MCF 10A (cell line): ENCODE measurements at regions of chr5 and their contacts with region 1.

Region 1: DNA sequence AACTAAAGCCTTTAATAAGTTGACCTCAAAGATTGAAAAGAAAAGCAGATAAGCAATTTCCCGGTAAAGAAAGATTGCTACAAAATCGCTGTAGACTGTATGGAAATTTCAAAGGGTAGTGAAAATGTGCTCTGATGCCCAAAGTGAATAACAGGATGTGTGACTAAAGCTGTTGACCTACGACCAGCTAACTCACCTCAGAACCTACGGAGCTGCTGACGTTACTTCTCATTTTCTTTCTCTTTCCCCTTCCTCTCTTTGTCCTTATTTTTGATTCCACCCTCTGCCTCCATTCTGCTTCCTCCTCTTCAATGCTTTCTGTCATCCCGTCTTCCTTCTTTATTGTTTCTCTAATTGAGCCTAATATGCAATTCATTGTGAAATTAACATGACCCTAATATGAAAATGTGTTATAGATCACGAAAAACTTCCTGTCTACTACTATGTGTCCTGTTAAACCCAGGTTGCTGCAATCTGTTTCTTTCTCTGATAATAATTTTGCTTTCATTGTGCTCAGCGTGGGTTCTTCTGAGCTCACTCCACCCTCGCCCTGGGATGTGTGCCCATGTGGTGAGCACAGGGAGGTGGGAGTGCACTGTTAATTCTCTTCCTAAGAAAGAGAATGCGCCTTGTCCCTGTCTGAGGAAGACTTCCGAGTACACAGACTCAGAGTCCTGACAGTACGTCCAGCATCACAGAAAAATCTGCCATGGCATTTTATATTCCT is 103.0 kb downstream of the PDE4D start:
- DNase-seq: peak; percentile 79
- H3K4me3 Mint-ChIP-seq: peak overlapping the region; percentile 52
- H3K27ac Mint-ChIP-seq: peak overlapping the region; percentile 89
- H3K4me1 Mint-ChIP-seq: peaks cover 67% of the 10 kb centered on the region
- H3K27me3 Mint-ChIP-seq: no peaks in the 10 kb centered on the region
- CTCF ChIP-seq: no peak

Region 2: DNA sequence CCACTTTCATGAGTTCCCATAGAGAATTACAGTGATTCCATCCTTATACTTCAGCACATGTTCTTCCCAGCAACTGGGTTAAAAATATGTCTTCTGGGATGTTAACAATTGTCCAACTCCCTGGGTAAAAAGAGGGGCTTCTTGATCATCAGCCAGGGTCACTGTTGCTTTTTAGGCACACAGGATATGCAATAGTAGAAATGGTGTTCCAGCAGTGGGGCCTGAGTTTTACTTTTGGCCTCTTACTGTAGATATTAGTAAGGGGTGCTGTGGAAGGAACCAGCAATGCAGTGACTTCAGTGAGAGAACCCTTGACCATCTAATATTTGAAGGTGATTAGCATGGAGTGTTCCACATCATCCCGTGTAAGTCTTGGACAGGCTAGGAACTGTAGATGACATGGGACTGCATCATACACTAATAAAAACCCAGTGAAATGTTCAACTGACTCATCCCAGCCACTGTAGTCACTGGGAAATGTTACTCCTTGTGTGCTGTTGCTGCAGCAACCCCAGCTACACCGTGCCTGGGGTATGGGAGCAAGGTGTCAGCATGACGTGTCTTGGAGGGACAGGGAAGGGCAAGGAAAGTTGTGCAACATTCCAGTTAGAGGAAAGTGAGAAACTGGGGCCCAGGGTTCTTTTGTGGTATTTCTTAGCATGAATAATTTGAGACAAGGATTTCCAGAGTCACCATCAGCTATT is 596.8 kb before region 1 on chr5:
- CTCF ChIA-PET with region 1: no interaction called
- POLR2A ChIA-PET with region 1: interaction called, 3 read pairs
- intact Hi-C with region 1: loop called (anchors 5 kb)
- DNase-seq: peak; percentile 98
- H3K4me3 Mint-ChIP-seq: peak overlapping the region; percentile 55
- H3K27ac Mint-ChIP-seq: peak overlapping the region; percentile 100
- H3K4me1 Mint-ChIP-seq: peaks cover 31% of the 10 kb centered on the region
- H3K27me3 Mint-ChIP-seq: no peaks in the 10 kb centered on the region
- CTCF ChIP-seq: no peak

Region 3: DNA sequence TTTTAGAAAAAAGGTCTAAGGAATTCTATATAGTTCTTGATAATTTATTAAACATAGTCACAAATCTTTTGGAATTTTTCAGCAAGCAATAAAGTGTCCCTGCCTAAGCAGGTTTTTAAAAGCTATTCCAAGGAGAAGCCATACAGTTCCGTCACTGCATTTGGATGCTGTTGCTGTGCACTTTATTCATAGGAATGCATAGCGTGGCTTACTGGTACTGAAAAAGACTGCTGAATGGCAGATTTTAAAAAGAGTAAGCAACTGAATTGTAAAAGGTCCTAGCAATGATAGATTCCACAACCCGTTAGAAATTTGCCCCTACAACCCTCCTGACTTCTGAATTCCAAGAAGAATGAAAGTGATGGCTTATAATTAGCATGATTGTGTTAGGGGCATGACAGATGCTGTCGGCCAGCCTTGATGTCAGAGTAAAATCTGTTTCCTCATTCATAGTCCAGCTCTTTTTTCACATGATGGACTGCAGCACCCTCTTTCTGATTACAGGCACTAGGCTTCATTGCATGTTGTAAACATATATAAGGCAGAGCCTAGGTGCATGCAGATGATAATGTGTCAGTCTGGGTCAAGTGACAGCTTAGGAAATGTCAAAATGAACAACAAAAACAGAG is 124.0 kb before region 1 on chr5:
- CTCF ChIA-PET with region 1: no interaction called
- POLR2A ChIA-PET with region 1: interaction called, 10 read pairs
- intact Hi-C with region 1: no loop called
- DNase-seq: no peak
- H3K4me3 Mint-ChIP-seq: no peak overlapping the region
- H3K27ac Mint-ChIP-seq: no peak overlapping the region
- H3K4me1 Mint-ChIP-seq: peaks cover 20% of the 10 kb centered on the region
- H3K27me3 Mint-ChIP-seq: no peaks in the 10 kb centered on the region
- CTCF ChIP-seq: no peak

Region 4: DNA sequence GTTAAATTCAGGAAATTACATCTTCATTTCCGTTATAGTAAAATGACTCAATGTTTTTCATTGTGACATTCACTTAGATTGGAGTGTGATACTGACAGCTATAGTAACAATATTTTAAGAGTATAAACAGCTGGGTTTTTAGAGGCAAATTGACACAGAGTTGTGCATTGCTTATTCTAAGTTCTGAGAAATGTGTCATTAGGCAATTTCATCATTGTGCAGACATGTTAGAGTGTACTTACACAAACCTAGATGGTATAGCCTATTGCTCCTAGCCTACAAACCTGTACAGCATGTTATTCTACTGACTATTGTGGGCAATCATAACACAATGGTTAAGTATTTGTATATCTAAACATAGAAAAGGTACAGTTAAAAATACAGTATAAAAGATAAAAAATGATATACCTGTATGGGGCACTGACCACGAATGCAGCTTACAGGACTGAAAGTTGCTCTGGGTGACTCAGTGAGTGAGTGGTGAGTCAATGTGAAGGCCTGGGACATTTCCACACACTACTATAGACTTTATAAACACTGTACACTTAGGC is 29.7 kb before region 1 on chr5:
- CTCF ChIA-PET with region 1: interaction called, 6 read pairs
- POLR2A ChIA-PET with region 1: interaction called, 437 read pairs
- intact Hi-C with region 1: no loop called
- DNase-seq: peak; percentile 90
- H3K4me3 Mint-ChIP-seq: no peak overlapping the region
- H3K27ac Mint-ChIP-seq: peak overlapping the region; percentile 96
- H3K4me1 Mint-ChIP-seq: peaks cover 43% of the 10 kb centered on the region
- H3K27me3 Mint-ChIP-seq: no peaks in the 10 kb centered on the region
- CTCF ChIP-seq: no peak

Region 5: GRCh38 chr5:59768152-59769040 is 22.2 kb before region 1 on chr5:
- CTCF ChIA-PET with region 1: interaction called, 37 read pairs
- POLR2A ChIA-PET with region 1: interaction called, 437 read pairs
- intact Hi-C with region 1: loop called (anchors 1 kb)
- DNase-seq: peak; percentile 94
- H3K4me3 Mint-ChIP-seq: peak overlapping the region; percentile 98
- H3K27ac Mint-ChIP-seq: peak overlapping the region; percentile 98
- H3K4me1 Mint-ChIP-seq: peaks cover 57% of the 10 kb centered on the region
- H3K27me3 Mint-ChIP-seq: no peaks in the 10 kb centered on the region
- CTCF ChIP-seq: no peak